ENCODE measurements at regions of chr10 and their contacts with region 1.

Region 1: GRCh38 chr10:35236739-35237138 is 99.6 kb upstream of the CCNY start:
- DNase-seq: no peak
- H3K4me3 Mint-ChIP-seq: no peak overlapping the region
- H3K27ac Mint-ChIP-seq: no peak overlapping the region
- H3K4me1 Mint-ChIP-seq: no peaks in the 10 kb centered on the region
- H3K27me3 Mint-ChIP-seq: no peaks in the 10 kb centered on the region

Region 2: GRCh38 chr10:35218339-35218955 is 18.3 kb before region 1 on chr10:
- CTCF ChIA-PET with region 1: interaction called, 11 read pairs
- intact Hi-C with region 1: no loop called
- DNase-seq: peak; percentile 96
- H3K4me3 Mint-ChIP-seq: peak overlapping the region; percentile 47
- H3K27ac Mint-ChIP-seq: peak overlapping the region; percentile 74
- H3K4me1 Mint-ChIP-seq: peaks cover 32% of the 10 kb centered on the region
- H3K27me3 Mint-ChIP-seq: no peaks in the 10 kb centered on the region

Region 3: DNA sequence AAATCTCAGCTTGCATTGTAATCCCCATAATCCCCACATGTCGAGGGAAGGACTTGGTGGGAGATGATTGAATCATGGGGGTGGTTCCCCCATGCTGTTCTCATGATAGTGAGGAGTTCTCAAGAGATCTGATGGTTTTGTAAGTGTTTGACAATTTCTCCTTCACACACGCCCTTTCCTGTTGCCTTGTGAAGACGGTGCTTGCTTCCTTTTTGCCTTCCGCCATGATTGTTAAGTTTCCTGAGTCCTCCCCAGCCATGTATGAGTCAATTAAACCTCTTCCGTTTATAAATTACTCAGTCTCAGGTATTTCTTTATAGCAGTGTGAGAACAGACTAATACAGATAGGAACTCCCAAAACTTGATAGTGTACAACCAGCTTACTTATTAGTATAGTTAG is 11.5 kb before region 1 on chr10:
- CTCF ChIA-PET with region 1: interaction called, 11 read pairs
- intact Hi-C with region 1: no loop called
- DNase-seq: no peak
- H3K4me3 Mint-ChIP-seq: no peak overlapping the region
- H3K27ac Mint-ChIP-seq: no peak overlapping the region
- H3K4me1 Mint-ChIP-seq: peaks cover 9% of the 10 kb centered on the region
- H3K27me3 Mint-ChIP-seq: no peaks in the 10 kb centered on the region

Region 4: DNA sequence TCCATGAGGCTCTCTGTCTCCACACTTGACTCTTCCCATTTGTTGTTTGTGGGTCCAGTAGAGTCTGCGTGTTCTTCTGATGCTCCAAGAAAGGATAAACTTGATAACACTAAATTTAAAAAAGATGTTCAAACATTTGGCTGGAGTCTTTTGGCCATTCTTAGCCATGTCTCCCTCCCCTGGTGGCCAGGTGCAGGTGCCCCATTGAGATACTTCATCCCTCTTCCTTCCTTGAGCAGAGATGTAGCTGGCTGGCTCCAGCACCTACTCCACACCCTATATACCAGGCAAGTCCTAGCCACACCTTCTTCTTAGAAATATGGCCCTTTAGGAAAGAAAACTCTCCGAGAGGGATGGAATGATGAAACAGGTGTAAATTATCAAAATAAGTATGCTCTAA is 265.2 kb after region 1 on chr10:
- CTCF ChIA-PET with region 1: interaction called, 3 read pairs
- intact Hi-C with region 1: loop called (anchors 10 kb)
- DNase-seq: no peak
- H3K4me3 Mint-ChIP-seq: no peak overlapping the region
- H3K27ac Mint-ChIP-seq: no peak overlapping the region
- H3K4me1 Mint-ChIP-seq: peaks cover 14% of the 10 kb centered on the region
- H3K27me3 Mint-ChIP-seq: no peaks in the 10 kb centered on the region

Region 5: GRCh38 chr10:35563261-35563891 is 326.6 kb after region 1 on chr10:
- CTCF ChIA-PET with region 1: interaction called, 7 read pairs
- intact Hi-C with region 1: loop called (anchors 1 kb)
- DNase-seq: peak; percentile 61
- H3K4me3 Mint-ChIP-seq: no peak overlapping the region
- H3K27ac Mint-ChIP-seq: no peak overlapping the region
- H3K4me1 Mint-ChIP-seq: peaks cover 2% of the 10 kb centered on the region
- H3K27me3 Mint-ChIP-seq: no peaks in the 10 kb centered on the region

Region 6: GRCh38 chr10:35594115-35595079 is 357.7 kb after region 1 on chr10:
- CTCF ChIA-PET with region 1: no interaction called
- intact Hi-C with region 1: no loop called
- DNase-seq: no peak
- H3K4me3 Mint-ChIP-seq: no peak overlapping the region
- H3K27ac Mint-ChIP-seq: no peak overlapping the region
- H3K4me1 Mint-ChIP-seq: no peaks in the 10 kb centered on the region
- H3K27me3 Mint-ChIP-seq: peaks cover 8% of the 10 kb centered on the region

Region 7: DNA sequence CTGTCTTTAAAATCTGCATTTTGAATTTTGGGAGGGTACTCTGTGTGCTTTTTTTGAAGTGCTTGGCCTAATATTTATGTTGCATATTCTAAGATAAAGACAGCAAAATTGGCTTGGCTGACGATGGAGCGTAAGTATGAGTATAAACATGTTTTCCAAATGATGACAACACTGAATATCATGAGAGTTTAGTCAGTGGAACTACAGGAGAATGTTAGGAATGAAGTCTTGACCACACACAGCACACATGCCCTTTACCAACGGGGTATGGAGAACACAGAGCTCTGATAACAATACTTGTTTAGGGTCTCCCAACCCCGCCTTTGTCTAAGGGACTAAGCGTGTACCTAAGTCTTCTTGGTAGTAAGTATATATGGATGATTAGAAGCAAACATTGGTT is 659.3 kb after region 1 on chr10:
- CTCF ChIA-PET with region 1: no interaction called
- intact Hi-C with region 1: no loop called
- DNase-seq: no peak
- H3K4me3 Mint-ChIP-seq: no peak overlapping the region
- H3K27ac Mint-ChIP-seq: no peak overlapping the region
- H3K4me1 Mint-ChIP-seq: no peaks in the 10 kb centered on the region
- H3K27me3 Mint-ChIP-seq: no peaks in the 10 kb centered on the region

Measured in activated naive CD4-positive, alpha-beta T cell treated with anti-CD3 and anti-CD28 coated beads for 36 hours (primary cell).